ENCODE measurements at regions of chr15 and their contacts with region 1.

Region 1: DNA sequence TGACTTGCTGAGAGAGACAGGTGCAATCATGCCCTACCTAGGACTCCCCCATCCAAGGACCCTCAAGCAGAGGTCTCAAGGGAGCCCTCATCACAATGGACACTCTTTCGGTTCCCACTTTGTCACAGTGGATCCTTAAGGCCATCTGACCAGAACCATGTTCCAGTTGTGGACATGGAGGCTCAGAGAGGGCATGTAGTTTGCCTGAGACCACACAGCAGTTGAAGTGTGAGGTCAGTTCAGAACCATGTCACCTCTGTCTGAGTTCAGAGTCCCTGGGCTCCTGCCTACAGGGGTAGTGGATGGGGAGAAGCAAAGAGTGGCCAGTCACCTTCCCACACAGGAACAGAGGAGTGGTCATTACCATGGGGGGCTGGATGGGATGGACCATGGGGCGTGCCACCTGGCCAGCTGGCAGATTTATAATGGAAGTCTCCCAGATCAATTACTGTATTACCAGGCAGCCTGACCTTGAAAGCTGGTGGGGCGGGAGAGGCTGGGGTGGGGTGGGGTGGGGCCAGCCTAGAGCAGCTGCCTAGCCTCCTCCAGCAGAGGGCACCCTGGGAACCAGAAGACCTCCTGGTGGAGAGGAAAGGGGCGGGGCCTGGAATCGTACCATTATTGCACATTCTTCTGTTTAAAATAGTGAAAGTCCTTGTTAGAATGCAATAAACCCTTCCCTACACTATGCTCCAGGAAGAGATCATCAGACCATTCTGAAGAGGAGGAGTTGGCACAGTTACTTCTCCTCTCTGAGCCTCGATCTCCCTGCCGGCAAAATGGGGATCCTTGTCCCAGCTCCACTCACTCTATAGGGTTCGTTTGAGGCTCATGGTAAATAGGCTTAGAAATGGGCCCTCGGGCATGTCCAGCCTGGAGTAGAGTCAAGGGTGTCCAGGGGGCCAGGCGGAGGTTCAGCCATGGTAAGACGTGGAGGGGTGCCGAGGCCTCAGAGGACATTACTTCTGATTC is 26.9 kb upstream of the LINGO1 start:
- DNase-seq: peak; percentile 53
- ATAC-seq: peak; percentile 77

Region 2: GRCh38 chr15:77430213-77430612 is 229.4 kb before region 1 on chr15:
- intact Hi-C with region 1: no loop called
- DNase-seq: no peak
- ATAC-seq: no peak

Region 3: DNA sequence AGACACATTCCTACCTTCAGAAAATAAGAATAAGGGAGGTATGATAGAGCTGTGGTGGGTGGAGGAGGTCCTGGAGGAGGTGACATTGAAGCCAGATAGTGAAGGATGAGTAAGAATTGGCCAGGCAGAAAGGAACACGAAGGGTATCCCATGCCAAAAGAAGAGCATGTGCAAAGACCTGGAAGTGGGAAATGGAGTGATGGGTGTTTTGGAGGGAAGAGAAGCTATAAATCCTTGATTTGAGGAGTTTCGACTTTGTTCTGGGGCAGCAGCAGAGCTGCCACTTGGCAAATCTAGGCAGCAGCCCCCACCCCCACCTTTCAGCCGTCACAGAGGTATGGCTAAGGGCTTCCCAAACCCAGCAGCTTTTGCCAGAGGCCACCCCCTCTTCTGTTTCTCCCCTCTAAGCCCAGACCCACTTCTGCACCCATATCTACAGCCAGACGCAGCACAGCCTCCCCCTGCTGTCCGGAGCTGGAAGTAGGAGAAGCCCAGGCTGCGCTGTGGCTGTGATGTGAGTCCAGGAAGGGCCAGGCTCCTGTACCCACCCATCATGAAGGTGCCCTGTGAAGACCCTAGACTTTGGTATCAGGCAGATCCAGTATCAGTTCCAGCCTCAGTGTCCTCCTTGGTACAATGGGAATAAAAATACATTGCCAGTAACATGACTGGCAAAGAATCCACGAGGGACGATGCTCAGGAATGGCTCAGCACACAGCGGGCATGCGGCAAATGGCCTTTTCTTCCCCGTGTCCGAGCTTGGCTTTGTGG is 161.7 kb after region 1 on chr15:
- intact Hi-C with region 1: loop called (anchors 10 kb)
- DNase-seq: peak; percentile 71
- ATAC-seq: peak; percentile 82